ENCODE measurements at regions of chr7 and their contacts with region 1.

Region 1: DNA sequence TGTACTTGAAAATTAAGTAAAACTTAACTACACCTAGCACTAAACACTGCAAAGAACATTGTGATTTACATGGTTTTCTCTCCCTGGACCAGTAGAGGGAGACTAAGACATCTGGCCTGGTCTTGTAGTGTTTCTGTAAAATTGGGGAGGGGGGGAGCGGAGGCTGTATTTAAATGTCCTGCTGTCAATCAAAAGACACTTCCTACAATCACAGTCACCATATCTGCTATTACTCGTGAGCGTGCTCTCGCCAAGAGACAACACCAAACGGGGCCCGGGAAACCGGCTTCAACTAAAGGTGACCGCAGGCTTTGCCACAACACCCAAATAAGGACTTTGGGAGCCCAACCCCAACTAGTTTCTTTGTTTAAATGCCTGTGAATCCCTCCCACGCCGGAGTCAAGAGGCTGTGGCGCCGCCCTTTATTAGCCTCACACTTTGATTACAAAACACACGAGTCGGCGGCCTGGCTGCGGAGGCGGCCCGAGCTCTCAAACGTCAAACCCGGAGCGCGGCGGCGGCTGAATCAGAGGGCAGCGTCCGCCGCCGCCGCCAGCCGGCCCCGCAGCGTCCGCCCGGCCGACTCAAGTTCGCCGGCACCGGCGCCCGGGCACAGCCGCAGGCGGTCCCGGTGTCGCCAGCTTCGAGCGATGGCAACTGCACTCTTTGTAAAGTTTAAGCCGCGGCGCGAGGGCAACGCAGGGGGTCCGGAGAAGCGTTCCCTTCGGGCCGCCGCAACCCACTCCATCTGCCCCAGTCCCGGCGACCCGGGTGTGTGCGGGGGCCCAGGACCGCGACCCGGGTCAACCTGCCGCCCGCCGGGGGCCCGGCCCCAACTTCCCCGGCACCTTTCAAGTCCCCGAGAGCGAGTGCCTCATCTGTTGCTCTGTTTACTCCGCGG is 1.3 kb downstream of the KDM7A start:
- DNase-seq: peak; percentile 97
- H3K4me3 Mint-ChIP-seq: peak overlapping the region; percentile 81
- H3K27ac Mint-ChIP-seq: peak overlapping the region; percentile 89
- H3K4me1 Mint-ChIP-seq: peaks cover 44% of the 10 kb centered on the region
- H3K27me3 Mint-ChIP-seq: no peaks in the 10 kb centered on the region

Region 2: GRCh38 chr7:139086454-139086853 is 1089.0 kb before region 1 on chr7:
- CTCF ChIA-PET with region 1: no interaction called
- intact Hi-C with region 1: no loop called
- DNase-seq: no peak
- H3K4me3 Mint-ChIP-seq: no peak overlapping the region
- H3K27ac Mint-ChIP-seq: peak overlapping the region; percentile 89
- H3K4me1 Mint-ChIP-seq: peaks cover 85% of the 10 kb centered on the region
- H3K27me3 Mint-ChIP-seq: no peaks in the 10 kb centered on the region

Region 3: GRCh38 chr7:139987691-139988516 is 187.6 kb before region 1 on chr7:
- CTCF ChIA-PET with region 1: no interaction called
- intact Hi-C with region 1: no loop called
- DNase-seq: no peak
- H3K4me3 Mint-ChIP-seq: no peak overlapping the region
- H3K27ac Mint-ChIP-seq: no peak overlapping the region
- H3K4me1 Mint-ChIP-seq: no peaks in the 10 kb centered on the region
- H3K27me3 Mint-ChIP-seq: no peaks in the 10 kb centered on the region

Region 4: GRCh38 chr7:140062528-140063299 is 112.8 kb before region 1 on chr7 and contains the start of gene PARP12:
- CTCF ChIA-PET with region 1: interaction called, 4 read pairs
- intact Hi-C with region 1: loop called (anchors 1 kb)
- DNase-seq: peak; percentile 76
- H3K4me3 Mint-ChIP-seq: peak within 1 kb of the TSS; percentile 81
- H3K27ac Mint-ChIP-seq: no peak within 1 kb of the TSS
- H3K4me1 Mint-ChIP-seq: peaks cover 35% of the 10 kb centered on the region
- H3K27me3 Mint-ChIP-seq: no peaks in the 10 kb centered on the region
- total RNA-seq, gene PARP12: 25.2 to 25.3 TPM

Region 5: DNA sequence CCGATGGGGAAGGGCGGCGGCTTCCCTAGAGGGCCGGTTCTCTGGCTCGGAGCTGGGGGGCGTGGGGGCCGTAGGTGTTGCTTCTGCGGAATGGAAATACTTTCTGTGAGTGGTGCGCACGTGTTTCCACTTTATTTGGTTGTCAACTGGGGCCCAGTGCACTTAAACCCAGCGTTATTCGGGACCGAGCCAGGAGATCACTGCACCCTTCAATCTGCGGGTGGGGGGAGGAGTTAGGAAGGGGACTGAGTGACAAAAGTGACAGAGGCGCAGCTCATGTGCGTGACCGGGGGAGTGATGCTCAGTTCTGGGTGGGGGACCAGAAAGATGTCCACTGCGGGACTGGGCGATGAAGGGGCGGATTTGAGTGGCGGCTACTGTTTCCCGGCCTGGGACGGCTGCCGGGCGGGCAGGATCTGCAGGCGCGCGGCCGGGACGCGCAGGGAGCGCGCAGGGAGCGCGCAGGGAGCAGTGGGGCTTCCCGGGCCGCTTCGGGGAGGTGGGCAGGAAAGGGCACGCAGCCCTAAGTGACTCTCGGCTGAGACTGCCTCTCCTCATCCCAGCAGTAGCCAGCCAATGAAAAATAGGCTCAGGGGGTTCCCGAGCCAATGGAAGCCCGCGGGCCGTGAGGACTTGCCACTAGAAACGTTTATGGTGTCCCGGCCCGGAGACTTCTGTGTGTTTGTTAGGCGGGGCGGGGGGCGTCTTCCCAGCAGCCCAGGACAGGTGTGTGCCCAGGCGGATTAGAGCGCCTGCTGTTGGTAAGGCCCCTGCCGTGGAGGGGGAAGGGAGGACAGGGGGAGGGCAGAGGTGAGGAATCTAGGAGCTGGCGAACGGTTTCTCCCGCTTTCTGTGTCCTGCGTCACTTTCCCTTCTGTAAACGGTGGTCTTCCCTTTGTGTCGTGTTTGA is 55.6 kb after region 1 on chr7:
- CTCF ChIA-PET with region 1: interaction called, 12 read pairs
- intact Hi-C with region 1: loop called (anchors 1 kb)
- DNase-seq: peak; percentile 85
- H3K4me3 Mint-ChIP-seq: peak overlapping the region; percentile 97
- H3K27ac Mint-ChIP-seq: peak overlapping the region; percentile 98
- H3K4me1 Mint-ChIP-seq: peaks cover 38% of the 10 kb centered on the region
- H3K27me3 Mint-ChIP-seq: no peaks in the 10 kb centered on the region

Region 6: DNA sequence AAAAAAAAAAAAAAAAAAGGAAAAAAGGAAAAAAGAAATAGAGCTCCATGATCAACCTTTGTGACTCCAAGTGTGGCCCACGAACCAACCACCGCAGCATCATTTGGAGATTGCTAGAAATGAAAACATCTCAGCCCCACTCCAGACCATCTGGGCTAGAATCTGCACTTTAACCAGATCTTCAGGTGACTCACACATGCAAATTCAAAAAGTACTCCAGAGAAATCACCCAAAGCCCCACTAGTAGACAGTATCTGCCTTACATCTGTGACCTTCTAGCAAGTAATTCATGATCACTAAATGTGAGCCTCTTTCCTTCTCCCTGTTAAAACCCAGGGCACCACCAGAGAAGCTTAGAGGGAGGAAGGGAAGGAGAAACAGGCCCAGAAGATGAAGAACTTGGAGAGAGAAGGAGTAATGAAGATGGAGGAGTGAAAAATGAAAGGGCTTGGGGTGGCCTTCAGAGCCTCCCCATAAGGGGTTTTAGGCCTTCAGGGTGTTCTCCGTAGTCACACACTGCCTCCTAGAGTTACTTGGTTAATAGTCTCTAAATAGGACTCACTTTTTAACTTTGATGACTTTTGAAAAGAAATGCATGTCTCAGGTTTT is 128.8 kb after region 1 on chr7:
- CTCF ChIA-PET with region 1: interaction called, 4 read pairs
- intact Hi-C with region 1: loop called (anchors 1 kb)
- DNase-seq: peak; percentile 55
- H3K4me3 Mint-ChIP-seq: no peak overlapping the region
- H3K27ac Mint-ChIP-seq: peak overlapping the region; percentile 90
- H3K4me1 Mint-ChIP-seq: peaks cover 7% of the 10 kb centered on the region
- H3K27me3 Mint-ChIP-seq: no peaks in the 10 kb centered on the region

Region 7: GRCh38 chr7:140403878-140404564 is 228.6 kb after region 1 on chr7 and contains the start of gene RAB19:
- CTCF ChIA-PET with region 1: no interaction called
- intact Hi-C with region 1: loop called (anchors 2 kb)
- DNase-seq: peak; percentile 67
- H3K4me3 Mint-ChIP-seq: peak within 1 kb of the TSS; percentile 82
- H3K27ac Mint-ChIP-seq: peak within 1 kb of the TSS; percentile 86
- H3K4me1 Mint-ChIP-seq: peaks cover 27% of the 10 kb centered on the region
- H3K27me3 Mint-ChIP-seq: no peaks in the 10 kb centered on the region
- total RNA-seq, gene RAB19: 4.6 to 5.2 TPM

Measured in activated naive CD4-positive, alpha-beta T cell treated with anti-CD3 and anti-CD28 coated beads for 36 hours (primary cell).